Heart right ventricle (tissue), 16 donors: ENCODE measurements at regions of chr15 and their contacts with region 1.

Region 1: DNA sequence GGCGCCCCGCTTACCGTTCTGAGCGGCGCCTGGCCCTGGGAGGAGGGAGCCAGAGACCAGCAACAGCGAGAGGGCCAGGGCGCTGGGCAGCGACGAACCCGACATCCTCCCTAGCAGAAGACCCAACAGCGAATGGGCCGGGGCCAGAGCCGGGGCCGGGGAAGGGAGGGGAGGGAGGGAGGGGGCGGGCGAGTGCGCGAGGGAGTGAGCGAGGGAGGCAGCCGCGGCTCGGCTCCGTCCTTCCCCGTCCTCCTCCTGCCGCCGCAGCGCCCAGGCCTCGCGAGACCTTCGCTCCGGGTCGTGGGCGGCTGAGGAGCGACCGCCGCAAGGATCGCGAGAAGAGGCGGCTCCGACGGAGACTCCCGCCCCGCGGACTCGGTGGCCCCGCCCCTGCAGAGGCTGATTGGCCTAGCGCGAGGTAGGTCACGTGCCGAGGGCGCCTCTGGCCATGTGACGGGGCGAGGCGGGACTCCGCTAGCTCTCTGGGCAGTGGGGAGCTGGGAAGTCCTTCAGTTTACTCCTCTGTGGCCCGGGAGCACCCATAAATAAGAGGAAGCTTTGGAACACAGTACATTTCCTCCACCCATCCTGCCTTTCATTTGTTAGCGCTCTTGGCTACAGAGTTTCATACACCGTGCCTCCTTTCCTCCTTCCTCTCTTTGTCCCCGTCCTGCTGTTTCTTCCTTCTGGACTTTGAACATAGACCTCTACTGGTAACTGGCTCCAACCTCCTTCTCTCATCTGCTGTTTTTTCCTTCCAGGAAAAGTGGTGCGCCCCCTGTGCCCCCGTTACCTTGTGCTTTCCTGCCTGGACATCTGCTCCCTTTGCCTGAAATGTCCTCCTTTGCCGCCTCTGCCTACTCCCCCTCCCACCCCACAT is at the start of gene NPTN:
- DNase-seq: peak; percentile 98 to 99
- ATAC-seq: peak; percentile 93 to 98 (median 96)
- H3K4me3 ChIP-seq: peak within 1 kb of the TSS; percentile 88 to 98 (median 96)
- H3K27ac ChIP-seq: peak within 1 kb of the TSS; percentile 94 to 99 (median 98)
- H3K4me1 ChIP-seq: peaks cover 4 to 63% (median 50%) of the 10 kb centered on the region in 9 donors
- H3K27me3 ChIP-seq: peaks cover 0 to 8% (median 0%) of the 10 kb centered on the region in 7 donors
- CTCF ChIP-seq: peak in 5 of 9 donors; percentile 6 to 27 (median 14)
- total RNA-seq, gene NPTN: 167 to 212 (median 188) TPM

Region 2: GRCh38 chr15:73240866-73241499 is 392.4 kb before region 1 on chr15:
- intact Hi-C with region 1: loop called in 1 of 10 experiments (anchors 5 kb)
- DNase-seq: peak in 1 of 2 donors; percentile 67
- ATAC-seq: peak in 2 of 8 donors; percentile 51 to 61
- H3K4me3 ChIP-seq: no peak overlapping the region
- H3K27ac ChIP-seq: no peak overlapping the region
- H3K4me1 ChIP-seq: peaks cover 0 to 12% (median 0%) of the 10 kb centered on the region in 9 donors
- H3K27me3 ChIP-seq: no peaks in the 10 kb centered on the region
- CTCF ChIP-seq: peak; percentile 70 to 94 (median 88)

Region 3: GRCh38 chr15:73305331-73306211 is 327.8 kb before region 1 on chr15:
- intact Hi-C with region 1: loop called in 5 of 10 experiments (anchors 5 to 10 kb)
- DNase-seq: peak in 1 of 2 donors; percentile 42
- ATAC-seq: peak; percentile 52 to 89 (median 83)
- H3K4me3 ChIP-seq: no peak overlapping the region
- H3K27ac ChIP-seq: no peak overlapping the region
- H3K4me1 ChIP-seq: peaks cover 0 to 17% (median 0%) of the 10 kb centered on the region in 9 donors
- H3K27me3 ChIP-seq: no peaks in the 10 kb centered on the region
- CTCF ChIP-seq: peak; percentile 29 to 69 (median 56)

Region 4: GRCh38 chr15:73573572-73573971 is 59.8 kb before region 1 on chr15:
- intact Hi-C with region 1: loop called in 1 of 10 experiments (anchors 5 kb)
- DNase-seq: peak in 1 of 2 donors; percentile 66
- ATAC-seq: peak; percentile 36 to 87 (median 60)
- H3K4me3 ChIP-seq: no peak overlapping the region
- H3K27ac ChIP-seq: peak overlapping the region in 7 of 10 donors; percentile 9 to 32 (median 19)
- H3K4me1 ChIP-seq: peaks cover 3 to 43% (median 24%) of the 10 kb centered on the region in 9 donors
- H3K27me3 ChIP-seq: no peaks in the 10 kb centered on the region
- CTCF ChIP-seq: no peak

Region 5: DNA sequence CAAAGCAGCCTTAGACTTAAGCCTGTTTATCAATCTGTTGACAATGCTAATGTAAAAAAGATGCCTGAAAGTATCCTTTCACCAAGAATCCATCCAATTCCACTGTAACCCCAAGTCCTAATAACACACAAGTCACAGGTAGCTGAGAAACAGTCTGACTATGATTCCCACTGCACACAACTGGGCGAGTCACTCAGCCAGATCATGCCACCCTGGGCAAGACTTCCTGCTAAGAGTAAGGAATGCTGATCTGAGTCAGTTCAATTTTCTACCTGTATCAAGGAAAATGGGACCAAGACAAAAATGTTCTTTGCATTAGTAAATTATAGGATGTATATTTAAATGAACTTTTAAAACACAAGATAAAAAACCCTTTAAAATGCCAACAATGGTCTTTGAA is 33.4 kb before region 1 on chr15:
- intact Hi-C with region 1: loop called in 3 of 10 experiments (anchors 5 kb)
- DNase-seq: no peak
- ATAC-seq: no peak
- H3K4me3 ChIP-seq: no peak overlapping the region
- H3K27ac ChIP-seq: peak overlapping the region in 1 of 10 donors; percentile 21
- H3K4me1 ChIP-seq: peaks cover 22 to 100% (median 95%) of the 10 kb centered on the region in 9 donors
- H3K27me3 ChIP-seq: no peaks in the 10 kb centered on the region
- CTCF ChIP-seq: no peak